ENCODE measurements at regions of chr6 and their contacts with region 1.

Region 1: DNA sequence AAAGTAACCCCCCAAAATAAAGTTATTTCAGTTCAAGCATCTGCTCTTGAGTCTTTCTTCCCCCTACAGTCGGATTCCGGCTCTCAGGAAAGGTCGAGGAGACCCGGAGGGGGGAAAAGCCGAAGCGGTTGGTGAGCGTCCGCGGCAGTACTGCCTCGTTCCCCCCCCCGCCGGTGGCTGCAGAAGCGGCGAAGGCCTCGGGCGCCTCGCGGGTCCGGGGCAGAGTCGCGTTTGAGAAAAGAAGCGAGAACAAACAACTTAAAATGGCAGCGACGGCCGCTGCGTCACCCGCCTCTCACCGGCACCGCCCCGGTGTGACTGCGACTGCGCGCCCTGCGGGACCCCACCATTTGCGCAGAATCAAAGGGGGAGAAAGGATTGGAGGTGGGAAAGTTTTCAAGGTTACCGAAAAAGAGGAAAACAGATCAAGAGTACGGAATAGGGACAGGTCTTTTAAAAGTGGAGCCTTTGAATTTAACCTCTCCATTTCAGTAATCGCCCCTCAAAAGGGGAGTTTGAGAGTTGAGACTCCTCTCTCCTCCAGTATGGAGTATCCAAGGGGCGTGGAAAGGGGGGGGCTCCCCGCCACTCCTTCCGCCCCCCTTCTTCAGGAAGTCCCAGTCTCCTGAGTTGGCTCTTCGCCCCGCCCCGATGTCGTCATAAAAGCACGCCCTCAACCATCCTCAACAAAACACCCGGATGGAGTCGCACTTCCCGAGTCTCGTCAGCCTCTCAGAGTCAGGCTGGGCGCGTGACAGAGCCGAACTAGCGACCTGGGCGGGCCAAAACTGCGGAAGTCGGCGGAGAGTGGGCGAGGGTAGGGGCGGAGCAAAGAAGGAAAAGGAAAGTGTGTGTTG is 1.9 kb upstream of the C6orf62 start:
- DNase-seq: peak; percentile 100
- H3K4me3 ChIP-seq: peak overlapping the region; percentile 86 to 95 (median 94)
- H3K27ac ChIP-seq: peak overlapping the region; percentile 99 to 100 (median 99)
- H3K4me1 ChIP-seq: peaks cover 0 to 46% (median 28%) of the 10 kb centered on the region in 4 donors
- H3K27me3 ChIP-seq: no peaks in the 10 kb centered on the region
- CTCF ChIP-seq: no peak
- EP300 ChIP-seq: peak in 1 of 4 donors; percentile 73
- POLR2A ChIP-seq: peak; percentile 99 to 100

Region 2: GRCh38 chr6:24431045-24431451 is 289.8 kb before region 1 on chr6:
- intact Hi-C with region 1: loop called (anchors 10 kb)
- DNase-seq: no peak
- H3K4me3 ChIP-seq: no peak overlapping the region
- H3K27ac ChIP-seq: no peak overlapping the region
- H3K4me1 ChIP-seq: peaks cover 0 to 5% (median 0%) of the 10 kb centered on the region in 4 donors
- H3K27me3 ChIP-seq: no peaks in the 10 kb centered on the region
- CTCF ChIP-seq: peak in 3 of 4 experiments; percentile 43 to 67 (median 61)
- EP300 ChIP-seq: no peak
- POLR2A ChIP-seq: no peak

Region 3: DNA sequence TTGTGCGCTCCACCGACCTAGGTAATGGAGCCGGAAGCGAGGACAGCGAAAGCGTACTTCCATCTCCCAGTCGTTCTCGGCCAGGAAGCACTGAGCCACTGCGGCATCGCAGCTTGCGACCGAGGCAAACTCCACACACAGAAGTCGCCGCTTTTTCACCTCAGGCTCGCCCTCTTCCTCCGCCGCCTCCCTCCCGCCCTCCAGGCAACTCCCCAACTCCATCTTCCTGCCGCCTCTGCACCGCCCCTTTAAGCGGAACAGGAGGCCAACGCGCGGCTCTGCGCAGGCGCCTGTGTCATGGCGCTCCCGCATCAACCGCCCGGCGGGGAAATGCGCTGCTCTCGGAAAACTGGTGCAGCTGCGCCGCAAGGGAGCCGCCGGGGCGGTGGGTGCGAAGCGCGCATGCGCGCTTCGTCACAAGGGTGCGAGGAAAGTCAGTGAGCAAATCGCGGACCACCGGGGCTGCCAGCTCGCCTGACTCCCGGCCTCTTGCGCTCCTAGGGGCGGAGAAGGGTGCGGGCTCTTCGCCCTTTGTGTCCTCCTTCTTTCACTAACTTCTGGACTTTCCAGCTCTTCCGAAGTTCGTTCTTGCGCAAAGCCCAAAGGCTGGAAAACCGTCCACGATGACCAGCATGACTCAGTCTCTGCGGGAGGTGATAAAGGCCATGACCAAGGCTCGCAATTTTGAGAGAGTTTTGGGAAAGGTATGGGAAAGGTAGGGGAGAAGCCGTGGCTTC is 54.0 kb before region 1 on chr6 and contains the starts of genes ACOT13 and TDP2:
- intact Hi-C with region 1: loop called (anchors 1 kb)
- DNase-seq: peak; percentile 98
- H3K4me3 ChIP-seq: peak within 1 kb of the TSS; percentile 76 to 97 (median 80)
- H3K27ac ChIP-seq: peak within 1 kb of the TSS; percentile 88 to 92 (median 92)
- H3K4me1 ChIP-seq: peaks cover 0 to 32% (median 26%) of the 10 kb centered on the region in 4 donors
- H3K27me3 ChIP-seq: no peaks in the 10 kb centered on the region
- CTCF ChIP-seq: peak; percentile 42 to 63 (median 52)
- EP300 ChIP-seq: no peak
- POLR2A ChIP-seq: peak; percentile 74 to 88
- total RNA-seq, gene ACOT13: 5.3 to 11.8 (median 9.2) TPM
- total RNA-seq, gene TDP2: 30.4 to 67.6 (median 48.2) TPM

Region 4: DNA sequence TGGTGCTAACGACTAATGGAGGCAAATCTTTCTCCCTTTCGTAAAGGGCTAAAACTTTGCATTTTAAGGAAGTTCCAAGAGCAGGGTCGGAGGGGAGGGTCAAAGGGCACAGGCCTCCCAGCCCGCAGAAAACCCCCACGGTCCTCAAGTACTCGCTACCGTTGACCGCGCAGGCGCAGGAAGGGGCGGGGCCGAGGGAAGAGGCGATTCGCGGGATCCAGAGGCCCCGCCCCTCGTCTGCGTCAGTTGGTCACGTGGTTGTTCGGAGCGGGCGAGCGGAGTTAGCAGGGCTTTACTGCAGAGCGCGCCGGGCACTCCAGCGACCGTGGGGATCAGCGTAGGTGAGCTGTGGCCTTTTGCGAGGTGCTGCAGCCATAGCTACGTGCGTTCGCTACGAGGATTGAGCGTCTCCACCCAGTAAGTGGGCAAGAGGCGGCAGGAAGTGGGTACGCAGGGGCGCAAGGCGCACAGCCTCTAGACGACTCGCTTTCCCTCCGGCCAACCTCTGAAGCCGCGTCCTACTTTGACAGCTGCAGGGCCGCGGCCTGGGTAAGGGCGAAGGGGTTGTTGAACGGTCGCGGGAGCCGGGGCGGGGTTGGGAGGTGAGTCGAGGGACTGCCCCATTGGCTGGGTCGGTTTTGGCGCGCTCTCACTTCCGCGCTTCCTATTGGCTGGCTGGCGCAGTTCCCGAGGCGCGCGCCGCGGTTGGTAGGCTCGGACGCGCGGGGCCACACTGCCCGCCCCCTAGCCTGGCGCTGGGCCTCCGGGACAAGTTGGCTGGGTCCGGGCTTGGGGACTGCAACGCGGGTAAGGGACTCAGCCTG is 54.1 kb after region 1 on chr6 and contains the start of gene GMNN:
- intact Hi-C with region 1: loop called (anchors 1 kb)
- DNase-seq: peak; percentile 99
- H3K4me3 ChIP-seq: peak within 1 kb of the TSS; percentile 86 to 99 (median 97)
- H3K27ac ChIP-seq: peak within 1 kb of the TSS; percentile 93 to 99 (median 98)
- H3K4me1 ChIP-seq: peaks cover 0 to 19% (median 5%) of the 10 kb centered on the region in 4 donors
- H3K27me3 ChIP-seq: no peaks in the 10 kb centered on the region
- CTCF ChIP-seq: no peak
- EP300 ChIP-seq: no peak
- POLR2A ChIP-seq: peak; percentile 27 to 59
- total RNA-seq, gene GMNN: 4.4 to 9.7 (median 8.2) TPM

Region 5: GRCh38 chr6:25962149-25963127 is 1241.6 kb after region 1 on chr6 and contains the start of gene TRIM38:
- intact Hi-C with region 1: loop called (anchors 5 kb)
- DNase-seq: peak; percentile 91
- H3K4me3 ChIP-seq: peak within 1 kb of the TSS; percentile 56 to 62 (median 61)
- H3K27ac ChIP-seq: peak within 1 kb of the TSS; percentile 86 to 91 (median 86)
- H3K4me1 ChIP-seq: peaks cover 0 to 53% (median 42%) of the 10 kb centered on the region in 4 donors
- H3K27me3 ChIP-seq: no peaks in the 10 kb centered on the region
- CTCF ChIP-seq: no peak
- EP300 ChIP-seq: no peak
- POLR2A ChIP-seq: peak; percentile 92 to 94
- total RNA-seq, gene TRIM38: 7.5 to 13.3 (median 8.2) TPM